Aorta (tissue), 5 donors: ENCODE measurements at regions of chr19 and their contacts with region 1.

Region 1: GRCh38 chr19:1113033-1113985 is 9.5 kb downstream of the GPX4 start:
- DNase-seq: peak; percentile 97 to 99
- ATAC-seq: peak; percentile 93
- H3K4me3 ChIP-seq: no peak overlapping the region
- H3K27ac ChIP-seq: peak overlapping the region in 1 of 2 donors; percentile 13
- H3K4me1 ChIP-seq: no peaks in the 10 kb centered on the region
- H3K27me3 ChIP-seq: no peaks in the 10 kb centered on the region

Region 2: GRCh38 chr19:1057176-1057855 is 56.0 kb before region 1 on chr19:
- intact Hi-C with region 1: no loop called
- DNase-seq: no peak
- ATAC-seq: no peak
- H3K4me3 ChIP-seq: no peak overlapping the region
- H3K27ac ChIP-seq: no peak overlapping the region
- H3K4me1 ChIP-seq: no peaks in the 10 kb centered on the region
- H3K27me3 ChIP-seq: no peaks in the 10 kb centered on the region

Region 3: GRCh38 chr19:1161716-1162115 is 48.4 kb after region 1 on chr19:
- intact Hi-C with region 1: no loop called
- DNase-seq: no peak
- ATAC-seq: no peak
- H3K4me3 ChIP-seq: no peak overlapping the region
- H3K27ac ChIP-seq: no peak overlapping the region
- H3K4me1 ChIP-seq: no peaks in the 10 kb centered on the region
- H3K27me3 ChIP-seq: no peaks in the 10 kb centered on the region

Region 4: GRCh38 chr19:1173845-1174809 is 60.8 kb after region 1 on chr19 and contains the start of gene SBNO2:
- intact Hi-C with region 1: loop called in 1 of 2 experiments (anchors 5 kb)
- DNase-seq: peak; percentile 90 to 98
- ATAC-seq: peak; percentile 91
- H3K4me3 ChIP-seq: peak within 1 kb of the TSS; percentile 84 to 86
- H3K27ac ChIP-seq: peak within 1 kb of the TSS in 1 of 2 donors; percentile 34
- H3K4me1 ChIP-seq: no peaks in the 10 kb centered on the region
- H3K27me3 ChIP-seq: no peaks in the 10 kb centered on the region
- total RNA-seq, gene SBNO2: 97.2 to 165 TPM

Region 5: GRCh38 chr19:1189419-1189818 is 76.1 kb after region 1 on chr19:
- intact Hi-C with region 1: loop called (anchors 5 kb)
- DNase-seq: no peak
- ATAC-seq: no peak
- H3K4me3 ChIP-seq: no peak overlapping the region
- H3K27ac ChIP-seq: no peak overlapping the region
- H3K4me1 ChIP-seq: no peaks in the 10 kb centered on the region
- H3K27me3 ChIP-seq: no peaks in the 10 kb centered on the region